Activated T-helper 1 cell treated with anti-CD3 and anti-CD28 coated beads, Interleukin-12 subunit alpha, Interleukin-12 subunit beta, Interleukin-2, Interleukin-4 antibody, amounts not matched to agents 30 ng/mL and 10 ng/mL and 1 ng/mL, durations not matched to agents 14 hours and 24 hours and 36 hours (primary cell): ENCODE measurements at regions of chr19 and their contacts with region 1.

Region 1: DNA sequence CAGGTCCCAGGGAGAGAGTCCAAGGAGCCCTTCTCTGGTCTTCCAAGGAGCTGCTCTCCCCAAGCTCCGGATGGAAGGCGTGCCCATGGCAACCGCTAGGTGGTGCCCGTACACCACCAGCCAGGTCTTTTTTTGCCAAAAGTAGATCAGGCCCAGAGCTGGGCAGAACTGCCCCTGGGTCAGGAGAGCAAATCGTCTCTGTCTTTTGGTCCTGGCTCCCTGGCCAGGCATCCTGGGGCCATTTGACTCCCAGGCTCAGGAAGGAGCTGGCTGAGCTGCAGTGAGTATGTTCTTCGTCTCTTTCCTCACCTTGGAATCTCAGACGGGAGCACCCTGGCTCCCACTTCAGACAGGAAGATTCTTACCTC is 24.6 kb upstream of the BCL3 start:
- DNase-seq: peak; percentile 77
- H3K4me3 Mint-ChIP-seq: peak overlapping the region; percentile 67
- H3K27ac Mint-ChIP-seq: peak overlapping the region; percentile 25
- H3K4me1 Mint-ChIP-seq: peaks cover 58% of the 10 kb centered on the region
- H3K27me3 Mint-ChIP-seq: no peaks in the 10 kb centered on the region

Region 2: GRCh38 chr19:44587963-44588770 is 135.8 kb before region 1 on chr19:
- intact Hi-C with region 1: no loop called
- DNase-seq: no peak
- H3K4me3 Mint-ChIP-seq: no peak overlapping the region
- H3K27ac Mint-ChIP-seq: no peak overlapping the region
- H3K4me1 Mint-ChIP-seq: no peaks in the 10 kb centered on the region
- H3K27me3 Mint-ChIP-seq: no peaks in the 10 kb centered on the region

Region 3: GRCh38 chr19:44653977-44654774 is 69.8 kb before region 1 on chr19:
- intact Hi-C with region 1: loop called (anchors 2 kb)
- DNase-seq: peak; percentile 66
- H3K4me3 Mint-ChIP-seq: no peak overlapping the region
- H3K27ac Mint-ChIP-seq: no peak overlapping the region
- H3K4me1 Mint-ChIP-seq: peaks cover 13% of the 10 kb centered on the region
- H3K27me3 Mint-ChIP-seq: no peaks in the 10 kb centered on the region

Region 4: DNA sequence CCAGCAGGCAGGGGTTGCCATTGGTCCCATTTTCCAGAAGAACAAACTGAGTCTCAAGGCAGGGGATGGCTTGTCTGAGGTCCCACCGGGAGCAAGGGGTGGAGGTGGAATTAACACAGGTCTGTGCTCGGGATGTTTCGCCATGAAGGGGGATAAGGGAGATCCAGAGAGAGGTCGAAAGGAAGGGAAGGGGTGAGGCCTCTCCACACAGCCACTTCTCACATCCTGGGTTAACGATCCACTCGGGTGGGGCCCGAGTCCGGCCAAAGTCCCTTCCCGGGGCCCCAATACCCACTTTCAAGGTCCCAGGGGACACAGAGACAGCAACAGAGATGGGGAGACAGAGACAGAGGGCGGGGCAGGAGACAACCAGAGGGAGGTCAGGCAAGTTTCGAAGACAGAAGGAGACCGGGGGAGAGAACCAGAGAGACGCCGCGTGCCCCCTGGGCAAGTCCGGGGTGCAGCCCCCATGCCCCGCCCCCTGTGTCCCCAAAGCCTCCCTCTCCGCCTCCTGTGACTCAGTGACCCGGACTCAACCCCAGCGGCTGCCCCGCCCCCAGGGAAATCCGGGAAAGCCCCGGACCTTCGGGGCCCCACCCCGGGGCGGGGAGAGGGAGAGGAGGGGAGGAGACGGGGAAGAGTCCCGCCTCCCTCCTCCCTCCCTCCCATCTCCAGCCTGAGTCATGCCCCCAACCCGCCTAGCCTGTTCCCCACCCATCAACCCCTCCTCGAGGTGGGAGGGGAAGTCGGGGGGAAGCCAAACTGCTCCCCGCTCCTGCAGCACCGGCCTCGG is 23.2 kb after region 1 on chr19:
- intact Hi-C with region 1: loop called (anchors 1 kb)
- DNase-seq: peak; percentile 87
- H3K4me3 Mint-ChIP-seq: peak overlapping the region; percentile 93
- H3K27ac Mint-ChIP-seq: peak overlapping the region; percentile 97
- H3K4me1 Mint-ChIP-seq: peaks cover 48% of the 10 kb centered on the region
- H3K27me3 Mint-ChIP-seq: no peaks in the 10 kb centered on the region

Region 5: DNA sequence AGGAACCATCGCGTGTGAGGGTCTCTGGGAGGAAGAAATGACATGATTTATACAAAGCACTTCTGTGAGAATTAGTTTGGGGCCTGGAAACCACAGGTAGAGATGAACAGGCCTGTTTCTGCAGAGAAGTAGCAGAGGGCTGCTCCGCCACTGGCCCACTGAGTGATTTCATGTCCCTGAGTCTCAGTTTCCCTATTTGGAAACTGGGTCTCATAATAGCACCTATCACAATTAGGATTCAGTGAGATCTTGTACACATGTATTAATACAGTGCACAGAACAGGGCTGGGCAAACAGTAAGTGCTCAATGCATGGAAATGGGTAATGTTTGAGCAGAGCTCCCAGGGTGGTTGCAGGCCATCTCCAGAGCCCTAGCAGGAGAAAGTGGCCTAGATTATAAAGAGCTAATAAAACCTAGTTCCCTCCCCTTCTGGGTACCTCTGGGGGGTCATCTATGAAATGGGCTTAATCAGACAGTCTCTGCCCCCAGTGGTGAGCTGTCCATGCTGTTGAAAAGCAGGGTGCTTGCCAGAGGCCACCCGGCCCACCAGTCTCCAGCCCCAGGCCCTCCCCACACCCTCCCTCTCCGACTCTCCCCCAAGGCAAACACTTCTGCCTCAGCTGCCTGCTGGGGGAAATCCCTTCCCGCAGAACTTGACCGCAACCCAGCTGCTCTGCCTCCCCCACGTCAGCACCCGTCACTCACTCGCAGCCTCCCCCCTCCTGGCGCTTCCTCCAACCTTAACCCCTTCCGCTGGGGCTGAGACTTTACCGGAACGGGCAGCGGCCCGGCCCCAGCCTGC is 29.1 kb after region 1 on chr19:
- intact Hi-C with region 1: loop called (anchors 1 kb)
- DNase-seq: peak; percentile 95
- H3K4me3 Mint-ChIP-seq: peak overlapping the region; percentile 88
- H3K27ac Mint-ChIP-seq: peak overlapping the region; percentile 90
- H3K4me1 Mint-ChIP-seq: peaks cover 60% of the 10 kb centered on the region
- H3K27me3 Mint-ChIP-seq: no peaks in the 10 kb centered on the region

Region 6: GRCh38 chr19:45293682-45294081 is 569.7 kb after region 1 on chr19:
- intact Hi-C with region 1: no loop called
- DNase-seq: no peak
- H3K4me3 Mint-ChIP-seq: no peak overlapping the region
- H3K27ac Mint-ChIP-seq: peak overlapping the region; percentile 52
- H3K4me1 Mint-ChIP-seq: peaks cover 8% of the 10 kb centered on the region
- H3K27me3 Mint-ChIP-seq: no peaks in the 10 kb centered on the region